ENCODE measurements at regions of chr1 and their contacts with region 1.

Region 1: DNA sequence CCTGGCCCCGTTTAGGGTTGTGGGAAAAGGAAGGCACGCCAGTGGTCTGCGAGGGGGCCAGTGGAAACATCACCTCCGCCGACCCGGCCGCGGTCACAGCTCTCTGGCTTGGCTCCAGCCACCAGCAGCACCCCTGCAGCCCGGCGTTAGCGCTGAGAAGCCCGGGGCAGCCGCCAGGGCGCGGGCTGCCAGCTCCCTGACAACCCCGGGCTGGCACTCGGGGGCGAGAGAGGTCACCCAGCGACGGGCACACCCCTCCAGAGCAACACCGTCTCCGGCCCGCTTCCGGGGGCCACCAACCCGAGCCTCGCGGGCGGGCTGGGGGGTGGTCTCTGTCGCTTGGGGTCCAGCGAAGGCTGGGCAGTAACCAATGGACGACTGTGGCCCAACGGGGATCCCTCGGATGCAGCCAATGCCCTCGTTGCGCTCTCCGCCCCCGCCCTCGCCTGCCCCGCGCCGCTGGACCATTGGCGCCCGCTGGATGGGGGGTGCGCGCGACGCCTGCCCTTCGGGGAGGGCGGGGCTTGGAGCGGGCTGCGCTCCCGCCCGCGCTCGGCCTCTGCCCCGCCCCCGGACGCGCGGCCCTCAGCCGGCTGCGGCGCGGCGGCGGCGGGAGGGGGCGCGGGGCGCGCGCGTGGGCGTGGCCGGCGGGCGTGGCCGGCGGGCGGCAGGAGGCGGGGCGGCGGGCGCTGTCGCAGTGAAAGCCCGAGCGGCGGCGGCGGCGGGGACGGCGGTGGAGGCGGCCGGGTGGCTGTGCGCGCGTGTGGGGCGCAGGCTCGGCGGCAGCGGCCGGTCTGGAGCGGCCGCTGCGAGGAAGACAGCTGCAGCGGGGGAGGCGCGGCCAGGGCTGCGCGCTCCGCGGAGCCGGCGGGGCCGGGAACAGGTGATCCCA is at the start of gene MAN1C1:
- DNase-seq: peak; percentile 92
- ATAC-seq: peak; percentile 95 to 96
- total RNA-seq, gene MAN1C1: 11.0 to 14.8 TPM

Region 2: GRCh38 chr1:25572708-25573600 is 43.4 kb before region 1 on chr1:
- intact Hi-C with region 1: no loop called
- DNase-seq: no peak
- ATAC-seq: peak; percentile 27 to 54

Region 3: DNA sequence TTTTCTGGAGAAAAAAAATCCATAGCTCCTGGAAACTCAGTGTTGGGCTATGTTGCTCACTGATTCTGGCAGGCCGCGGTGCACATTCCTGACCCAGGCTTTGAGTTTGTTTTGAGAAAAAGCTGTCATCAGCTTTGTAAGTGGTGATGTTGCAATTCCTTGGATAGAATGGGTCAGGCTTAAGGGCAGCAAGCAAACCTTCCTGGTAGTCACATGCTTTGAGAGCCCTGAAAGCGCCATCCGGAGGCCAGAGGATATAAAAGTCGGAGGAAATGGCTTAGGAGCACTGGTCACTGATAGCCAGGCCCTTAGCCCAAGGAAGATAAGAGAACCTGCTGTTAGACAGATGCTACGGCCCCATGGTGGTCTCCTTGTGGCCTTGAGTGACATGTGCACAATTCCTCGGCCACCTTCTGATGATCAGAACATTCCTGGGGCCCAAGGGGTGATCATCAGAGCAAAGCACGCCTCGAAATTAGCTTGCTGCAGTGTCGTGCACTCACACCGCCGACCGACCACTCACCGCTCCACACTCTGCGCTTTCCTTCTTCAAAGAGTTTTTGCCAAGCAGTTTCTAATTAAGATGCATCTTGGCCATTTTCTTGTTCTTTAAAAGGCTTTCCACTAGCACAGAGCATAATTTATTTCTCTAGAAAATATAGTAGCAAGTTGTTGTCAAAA is 78.9 kb after region 1 on chr1:
- intact Hi-C with region 1: loop called in 1 of 2 experiments (anchors 2 kb)
- DNase-seq: peak; percentile 80
- ATAC-seq: peak; percentile 88 to 91

Region 4: DNA sequence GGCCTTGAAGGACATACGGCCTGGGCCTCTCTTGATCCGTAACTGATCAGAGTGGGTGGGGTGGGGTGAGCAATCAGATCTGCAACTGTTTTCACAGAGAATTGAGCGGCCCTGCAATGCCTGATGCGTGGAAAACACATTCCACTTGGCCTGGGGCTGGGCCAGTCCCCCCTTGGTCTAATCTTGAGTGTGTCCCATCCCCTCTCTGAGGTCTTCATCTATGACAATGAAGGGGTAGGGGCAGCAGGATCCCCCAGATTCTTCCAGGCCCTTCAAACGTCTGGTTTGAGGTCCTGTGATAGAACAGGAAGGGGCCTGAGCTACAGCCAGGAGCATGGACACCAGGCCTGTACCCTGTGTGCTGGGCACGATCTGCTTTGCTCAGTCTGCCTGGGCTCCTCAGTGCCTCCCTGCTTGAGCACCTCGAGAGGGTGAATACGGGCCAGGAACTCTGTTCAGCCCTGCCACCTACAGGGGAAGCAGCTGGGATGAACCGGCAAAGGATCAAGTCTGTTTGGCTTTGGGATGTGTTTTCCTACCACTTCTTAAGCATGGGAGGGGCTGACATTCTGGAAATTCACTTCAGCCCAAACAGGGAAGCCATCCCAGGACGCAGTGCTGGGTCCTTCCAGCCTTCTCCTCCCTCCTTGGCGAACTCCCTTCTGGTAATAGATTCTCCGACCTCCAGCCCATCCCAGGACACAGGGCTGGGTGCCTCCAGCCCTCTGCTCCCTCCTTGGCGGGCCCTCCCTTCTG is 127.7 kb after region 1 on chr1:
- intact Hi-C with region 1: loop called in 1 of 2 experiments (anchors 2 kb)
- DNase-seq: peak; percentile 72
- ATAC-seq: peak; percentile 79 to 90